ENCODE measurements at regions of chr13 and their contacts with region 1.

Region 1: GRCh38 chr13:106567474-106568298 is at the start of gene ARGLU1:
- DNase-seq: peak; percentile 94
- H3K4me3 Mint-ChIP-seq: peak within 1 kb of the TSS; percentile 93
- H3K27ac Mint-ChIP-seq: peak within 1 kb of the TSS; percentile 87
- H3K4me1 Mint-ChIP-seq: peaks cover 44% of the 10 kb centered on the region
- H3K27me3 Mint-ChIP-seq: no peaks in the 10 kb centered on the region
- total RNA-seq, gene ARGLU1: 90.4 and 92.7 TPM in 2 replicates

Region 2: GRCh38 chr13:106917673-106918556 is 350.2 kb after region 1 on chr13:
- intact Hi-C with region 1: loop called (anchors 2 kb)
- DNase-seq: peak; percentile 67
- H3K4me3 Mint-ChIP-seq: peak overlapping the region; percentile 75
- H3K27ac Mint-ChIP-seq: no peak overlapping the region
- H3K4me1 Mint-ChIP-seq: no peaks in the 10 kb centered on the region
- H3K27me3 Mint-ChIP-seq: peaks cover 14% of the 10 kb centered on the region